Sigmoid colon (tissue), 7 donors: ENCODE measurements at regions of chr2 and their contacts with region 1.

Region 1: DNA sequence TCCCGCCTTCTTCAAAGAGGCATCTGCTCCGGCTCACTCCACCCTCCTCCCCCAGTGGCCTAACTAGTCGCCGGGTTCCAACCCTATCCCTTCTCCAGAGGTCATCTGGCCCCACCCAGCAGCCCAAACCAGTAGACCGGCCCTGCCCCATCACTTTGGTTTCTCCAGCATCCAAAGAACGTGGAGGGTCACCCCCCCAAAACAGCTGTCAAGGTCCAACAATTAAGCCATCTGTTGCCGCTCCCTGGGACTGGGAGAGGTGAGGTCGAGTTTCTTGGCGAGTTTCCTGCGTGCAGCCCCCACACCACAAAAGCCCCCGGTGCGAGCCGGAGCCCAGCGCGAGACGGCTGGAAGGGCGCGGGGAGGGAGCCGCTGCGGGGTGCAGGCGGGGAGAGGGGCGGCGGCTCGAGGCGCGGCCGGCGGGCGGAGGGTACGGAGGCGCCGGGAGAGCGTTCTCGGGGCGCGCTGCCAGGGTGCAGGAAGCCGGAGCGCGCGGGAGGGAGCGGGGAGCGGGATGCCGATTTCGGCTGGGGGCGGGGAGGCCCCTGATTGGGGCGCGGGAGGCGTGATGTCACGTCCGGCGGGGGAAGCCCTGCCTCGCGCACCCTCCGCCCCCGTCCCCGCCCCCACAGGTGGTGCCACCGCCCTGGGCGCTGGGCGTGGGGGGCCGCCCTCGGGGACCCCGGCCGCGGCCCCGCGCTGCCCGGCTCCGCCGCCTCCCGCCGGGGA is 571 bp upstream of the GPC1 start:
- DNase-seq: peak; percentile 98
- H3K4me3 ChIP-seq: peak overlapping the region; percentile 43 to 86 (median 66)
- H3K27ac ChIP-seq: peak overlapping the region; percentile 88 to 94 (median 92)
- H3K4me1 ChIP-seq: peaks cover 0 to 46% (median 42%) of the 10 kb centered on the region in 4 donors
- H3K27me3 ChIP-seq: no peaks in the 10 kb centered on the region
- CTCF ChIP-seq: no peak
- EP300 ChIP-seq: no peak
- POLR2A ChIP-seq: no peak

Region 2: GRCh38 chr2:240136013-240136670 is 298.8 kb before region 1 on chr2 and contains the start of gene COPS9:
- intact Hi-C with region 1: loop called (anchors 5 kb)
- DNase-seq: peak; percentile 92
- H3K4me3 ChIP-seq: peak within 1 kb of the TSS; percentile 95 to 100 (median 99)
- H3K27ac ChIP-seq: peak within 1 kb of the TSS; percentile 78 to 88 (median 83)
- H3K4me1 ChIP-seq: peaks cover 0 to 21% (median 19%) of the 10 kb centered on the region in 4 donors
- H3K27me3 ChIP-seq: no peaks in the 10 kb centered on the region
- CTCF ChIP-seq: no peak
- EP300 ChIP-seq: no peak
- POLR2A ChIP-seq: peak in 1 of 2 donors; percentile 30
- total RNA-seq, gene COPS9: 235 to 376 (median 317) TPM

Region 3: DNA sequence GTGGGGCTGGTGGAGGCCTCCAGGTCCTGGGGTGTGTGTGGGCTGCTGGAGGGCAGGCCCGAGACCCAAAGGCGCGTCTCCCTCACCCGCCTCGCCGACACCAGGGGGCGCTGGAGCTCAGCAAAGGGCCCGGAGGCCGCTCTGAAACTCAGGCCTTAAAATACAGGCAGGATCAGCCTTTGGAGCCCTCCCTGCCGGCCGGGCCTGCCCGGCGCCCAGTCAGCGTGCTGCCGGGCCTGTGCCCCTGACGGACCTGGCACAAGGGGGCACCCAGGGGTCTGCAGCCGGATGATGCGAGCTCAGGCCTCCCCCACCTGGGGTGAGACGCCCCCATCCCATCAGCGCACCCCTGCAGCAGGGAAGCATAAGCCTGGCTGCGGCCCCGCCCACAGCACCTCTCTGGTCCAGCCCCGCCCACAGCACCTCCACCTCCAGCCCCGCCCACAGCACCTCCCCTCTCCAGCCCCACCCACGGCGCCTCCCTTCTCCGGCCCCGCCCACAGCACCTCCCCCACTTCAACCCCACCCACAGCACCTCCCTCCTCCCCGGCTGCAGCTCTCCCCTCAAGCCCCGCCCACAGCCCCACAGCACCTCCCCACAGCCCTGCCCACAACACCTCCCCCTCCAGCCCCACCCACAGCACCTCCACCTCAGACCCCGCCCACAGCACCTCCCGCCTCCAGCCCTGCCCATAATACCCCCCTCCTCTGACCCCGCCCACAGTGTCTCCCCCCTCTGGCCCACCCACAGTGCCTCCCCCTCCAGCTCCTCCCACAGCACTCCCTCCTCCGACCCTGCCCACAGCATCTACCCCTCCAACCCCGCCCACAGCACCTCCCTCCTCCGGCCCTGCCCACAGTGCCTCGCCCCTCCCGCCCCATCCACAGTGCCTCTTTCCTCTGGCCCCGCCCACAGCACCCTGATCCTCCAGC is 201.7 kb before region 1 on chr2:
- intact Hi-C with region 1: loop called (anchors 1 kb)
- DNase-seq: peak; percentile 92
- H3K4me3 ChIP-seq: peak overlapping the region; percentile 14 to 38 (median 26)
- H3K27ac ChIP-seq: peak overlapping the region; percentile 52 to 69 (median 62)
- H3K4me1 ChIP-seq: peaks cover 0 to 20% (median 14%) of the 10 kb centered on the region in 4 donors
- H3K27me3 ChIP-seq: no peaks in the 10 kb centered on the region
- CTCF ChIP-seq: peak; percentile 83 to 93 (median 85)
- EP300 ChIP-seq: peak in 1 of 4 donors; percentile 3
- POLR2A ChIP-seq: no peak

Region 4: DNA sequence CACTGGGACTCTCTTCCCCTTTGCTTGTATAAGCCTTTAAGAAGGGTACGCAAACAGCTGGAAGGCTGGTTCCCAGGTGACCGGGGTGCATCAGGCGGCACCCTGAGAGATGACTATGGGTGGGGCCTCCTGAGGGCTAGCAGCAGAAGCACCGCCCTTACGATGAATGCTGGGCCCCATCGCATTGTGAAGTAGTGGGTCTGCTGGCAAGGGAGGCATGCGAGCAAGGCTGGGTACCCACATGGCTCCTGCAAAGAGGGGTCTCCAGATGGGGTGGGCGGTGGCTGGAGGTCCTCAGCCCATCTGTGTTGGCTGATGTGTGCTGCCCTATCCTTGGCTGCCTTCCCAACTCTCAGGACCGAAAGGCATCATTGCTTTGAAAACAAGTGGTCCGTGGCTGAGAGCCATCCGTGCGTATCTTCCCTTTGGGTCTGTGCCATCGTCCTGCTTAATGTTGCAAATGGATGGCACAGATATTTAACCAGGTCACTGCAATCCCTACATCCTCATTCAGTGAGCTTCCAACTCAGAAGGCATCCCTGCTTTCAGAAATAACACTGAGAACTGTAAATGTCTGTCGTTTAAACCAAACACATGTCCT is 83.0 kb before region 1 on chr2:
- intact Hi-C with region 1: loop called (anchors 5 kb)
- DNase-seq: peak; percentile 72
- H3K4me3 ChIP-seq: no peak overlapping the region
- H3K27ac ChIP-seq: peak overlapping the region in 2 of 4 donors; percentile 64 to 65
- H3K4me1 ChIP-seq: peaks cover 0 to 37% (median 25%) of the 10 kb centered on the region in 4 donors
- H3K27me3 ChIP-seq: no peaks in the 10 kb centered on the region
- CTCF ChIP-seq: no peak
- EP300 ChIP-seq: no peak
- POLR2A ChIP-seq: no peak

Region 5: GRCh38 chr2:240369801-240370585 is 64.9 kb before region 1 on chr2:
- intact Hi-C with region 1: loop called (anchors 5 kb)
- DNase-seq: peak; percentile 86
- H3K4me3 ChIP-seq: no peak overlapping the region
- H3K27ac ChIP-seq: peak overlapping the region; percentile 74 to 88 (median 83)
- H3K4me1 ChIP-seq: peaks cover 0 to 73% (median 42%) of the 10 kb centered on the region in 4 donors
- H3K27me3 ChIP-seq: no peaks in the 10 kb centered on the region
- CTCF ChIP-seq: no peak
- EP300 ChIP-seq: peak in 1 of 4 donors; percentile 60
- POLR2A ChIP-seq: no peak

Region 6: DNA sequence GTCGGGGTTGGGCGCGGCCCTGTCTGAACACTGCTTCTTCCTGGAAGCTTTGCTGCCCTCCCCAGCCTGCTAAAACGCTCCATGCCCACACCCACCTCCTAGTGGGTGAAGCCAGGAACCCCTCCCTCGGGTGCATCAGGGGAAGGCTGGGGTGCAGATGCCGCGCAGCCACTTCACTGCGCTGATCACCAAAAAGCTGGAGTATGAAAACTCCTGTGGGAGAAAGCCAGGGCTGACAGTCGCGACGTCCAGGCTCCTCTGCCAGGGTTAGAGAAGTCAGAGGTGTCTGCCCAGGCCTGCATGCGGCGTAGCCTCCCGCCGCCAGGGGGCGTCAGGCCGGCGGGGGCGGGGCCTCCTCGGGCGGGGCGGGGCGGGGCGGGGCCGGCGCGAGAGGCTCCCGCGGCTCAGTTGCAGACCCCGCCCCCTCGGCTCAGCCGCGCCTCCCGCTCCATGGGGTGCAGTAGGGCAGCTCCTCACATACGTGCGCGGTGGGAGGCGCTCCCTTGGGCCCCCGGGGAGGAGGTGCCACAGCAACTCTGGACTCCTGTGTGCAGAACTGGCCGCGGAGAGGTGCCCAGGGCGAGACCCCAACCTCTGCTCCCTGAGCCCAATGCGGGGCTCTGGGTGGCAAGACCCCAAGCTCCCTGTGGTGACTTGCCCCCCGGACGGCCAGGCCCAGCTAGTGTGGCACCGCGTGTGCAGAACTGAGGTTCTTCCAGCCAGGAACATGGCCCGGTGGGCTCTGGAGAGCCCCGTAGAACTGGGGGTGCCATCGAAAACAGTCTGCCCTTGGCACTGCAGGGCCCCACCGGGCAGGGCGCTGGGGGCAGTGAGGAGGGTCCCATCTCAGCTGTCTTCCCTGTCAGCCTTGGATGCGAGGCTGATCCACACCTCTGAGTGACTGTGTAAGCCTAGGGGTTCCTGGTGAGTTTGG is 131.6 kb after region 1 on chr2:
- intact Hi-C with region 1: loop called (anchors 5 kb)
- DNase-seq: peak; percentile 98
- H3K4me3 ChIP-seq: peak overlapping the region in 3 of 4 donors; percentile 58 to 85 (median 81)
- H3K27ac ChIP-seq: peak overlapping the region; percentile 93 to 98 (median 96)
- H3K4me1 ChIP-seq: peaks cover 0 to 62% (median 59%) of the 10 kb centered on the region in 4 donors
- H3K27me3 ChIP-seq: no peaks in the 10 kb centered on the region
- CTCF ChIP-seq: peak; percentile 25 to 97 (median 75)
- EP300 ChIP-seq: no peak
- POLR2A ChIP-seq: peak in 1 of 2 donors; percentile 34

Region 7: GRCh38 chr2:240913810-240914644 is 479.1 kb after region 1 on chr2:
- intact Hi-C with region 1: no loop called
- DNase-seq: peak; percentile 76
- H3K4me3 ChIP-seq: no peak overlapping the region
- H3K27ac ChIP-seq: no peak overlapping the region
- H3K4me1 ChIP-seq: peaks cover 0 to 25% (median 14%) of the 10 kb centered on the region in 4 donors
- H3K27me3 ChIP-seq: peaks cover 8 to 51% (median 24%) of the 10 kb centered on the region in 3 donors
- CTCF ChIP-seq: peak in 3 of 4 experiments; percentile 43 to 68 (median 54)
- EP300 ChIP-seq: no peak
- POLR2A ChIP-seq: no peak